Mammary epithelial cell (primary cell): ENCODE measurements at regions of chr3 and their contacts with region 1.

Region 1: GRCh38 chr3:148309390-148310035 is 388.2 kb upstream of the AGTR1 start:
- DNase-seq: peak; percentile 15
- H3K4me3 ChIP-seq: no peak overlapping the region
- H3K27ac ChIP-seq: no peak overlapping the region
- H3K4me1 ChIP-seq: no peaks in the 10 kb centered on the region
- H3K27me3 ChIP-seq: no peaks in the 10 kb centered on the region
- CTCF ChIP-seq: peak; percentile 65 to 77

Region 2: DNA sequence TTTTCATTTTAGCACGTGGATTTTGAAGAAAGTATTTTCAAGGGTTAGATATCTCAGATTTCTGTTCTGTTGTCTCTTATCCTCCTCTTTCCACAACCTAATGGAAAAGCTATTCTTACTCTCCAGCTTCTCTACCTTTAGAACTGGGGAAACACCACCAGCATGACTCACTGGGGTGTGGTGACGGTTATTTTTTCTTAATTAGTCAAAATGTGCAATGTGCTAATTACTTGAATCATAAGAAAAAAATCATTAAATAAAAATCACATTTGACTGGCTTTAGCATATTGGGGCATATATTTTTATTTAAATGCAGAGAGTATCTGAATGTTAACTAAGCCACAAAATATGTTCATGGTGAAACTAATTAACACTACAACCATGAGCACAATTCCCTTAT is 182.6 kb before region 1 on chr3:
- CTCF ChIA-PET with region 1: no interaction called
- dilution Hi-C with region 1: no loop called
- in situ Hi-C with region 1: no loop called
- intact Hi-C with region 1: no loop called
- DNase-seq: no peak
- H3K4me3 ChIP-seq: no peak overlapping the region
- H3K27ac ChIP-seq: no peak overlapping the region
- H3K4me1 ChIP-seq: no peaks in the 10 kb centered on the region
- H3K27me3 ChIP-seq: no peaks in the 10 kb centered on the region
- CTCF ChIP-seq: no peak

Region 3: GRCh38 chr3:148246291-148246923 is 63.1 kb before region 1 on chr3:
- CTCF ChIA-PET with region 1: no interaction called
- dilution Hi-C with region 1: no loop called
- in situ Hi-C with region 1: no loop called
- intact Hi-C with region 1: no loop called
- DNase-seq: no peak
- H3K4me3 ChIP-seq: no peak overlapping the region
- H3K27ac ChIP-seq: no peak overlapping the region
- H3K4me1 ChIP-seq: no peaks in the 10 kb centered on the region
- H3K27me3 ChIP-seq: no peaks in the 10 kb centered on the region
- CTCF ChIP-seq: no peak

Region 4: GRCh38 chr3:148366743-148367410 is 57.4 kb after region 1 on chr3:
- CTCF ChIA-PET with region 1: no interaction called
- dilution Hi-C with region 1: no loop called
- in situ Hi-C with region 1: no loop called
- intact Hi-C with region 1: loop called (anchors 1 kb)
- DNase-seq: no peak
- H3K4me3 ChIP-seq: no peak overlapping the region
- H3K27ac ChIP-seq: no peak overlapping the region
- H3K4me1 ChIP-seq: no peaks in the 10 kb centered on the region
- H3K27me3 ChIP-seq: peaks cover 1% of the 10 kb centered on the region
- CTCF ChIP-seq: peak in 1 of 2 donors; percentile 21